H1 (cell line): ENCODE measurements at regions of chr3 and their contacts with region 1.

Region 1: GRCh38 chr3:118884748-118885206 is 149.9 kb downstream of the IGSF11 start:
- DNase-seq: peak in 1 of 2 experiments; percentile 79
- H3K4me3 ChIP-seq: no peak overlapping the region; a peak in 1 of 8 replicates
- H3K27ac ChIP-seq: no peak overlapping the region
- H3K4me1 ChIP-seq: 0 out of 7 replicates have a peak, but pooled peaks cover 0 to 3% (median 0%) of the 10 kb centered on the region in 4 experiments
- H3K27me3 ChIP-seq: no peaks in the 10 kb centered on the region
- CTCF ChIP-seq: peak; percentile 67 to 97 (median 90)
- EP300 ChIP-seq: no peak
- POLR2A ChIP-seq: no peak
- RAD21 ChIP-seq: peak; percentile 58 to 67

Region 2: DNA sequence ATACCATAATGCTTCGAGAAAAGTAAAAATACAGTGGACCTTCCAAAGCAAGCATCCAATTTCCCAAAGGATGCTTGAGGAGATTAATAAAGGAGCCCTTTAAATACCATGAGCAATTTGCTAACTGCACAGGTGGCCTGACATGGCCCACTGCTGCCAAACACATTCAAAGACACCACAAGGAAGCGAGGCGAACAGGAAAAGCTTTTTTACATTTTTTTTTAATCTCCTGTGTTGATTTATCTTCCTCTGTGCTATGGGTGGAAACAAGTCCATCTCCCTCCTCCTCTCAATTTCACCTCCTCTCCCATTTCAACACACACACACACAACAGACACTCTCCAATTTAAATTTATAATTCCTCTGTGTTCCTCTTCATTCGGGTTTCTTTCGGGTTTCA is 93.5 kb before region 1 on chr3:
- CTCF ChIA-PET with region 1: no interaction called
- POLR2A ChIA-PET with region 1: no interaction called
- DNase-seq: no peak
- H3K4me3 ChIP-seq: no peak overlapping the region
- H3K27ac ChIP-seq: no peak overlapping the region
- H3K4me1 ChIP-seq: no peaks in the 10 kb centered on the region
- H3K27me3 ChIP-seq: no peaks in the 10 kb centered on the region
- CTCF ChIP-seq: no peak
- EP300 ChIP-seq: no peak
- POLR2A ChIP-seq: no peak
- RAD21 ChIP-seq: no peak

Region 3: GRCh38 chr3:118801899-118802298 is 82.9 kb before region 1 on chr3:
- CTCF ChIA-PET with region 1: no interaction called
- POLR2A ChIA-PET with region 1: no interaction called
- DNase-seq: no peak
- H3K4me3 ChIP-seq: no peak overlapping the region
- H3K27ac ChIP-seq: no peak overlapping the region
- H3K4me1 ChIP-seq: no peaks in the 10 kb centered on the region
- H3K27me3 ChIP-seq: no peaks in the 10 kb centered on the region
- CTCF ChIP-seq: no peak
- EP300 ChIP-seq: no peak
- POLR2A ChIP-seq: no peak
- RAD21 ChIP-seq: no peak

Region 4: GRCh38 chr3:118909763-118910162 is 25.0 kb after region 1 on chr3:
- CTCF ChIA-PET with region 1: interaction called, 42 read pairs
- POLR2A ChIA-PET with region 1: no interaction called
- DNase-seq: no peak
- H3K4me3 ChIP-seq: no peak overlapping the region
- H3K27ac ChIP-seq: no peak overlapping the region
- H3K4me1 ChIP-seq: peaks cover 0 to 3% (median 0%) of the 10 kb centered on the region in 4 experiments; a peak in 2 of 7 replicates
- H3K27me3 ChIP-seq: no peaks in the 10 kb centered on the region
- CTCF ChIP-seq: no peak
- EP300 ChIP-seq: no peak
- POLR2A ChIP-seq: no peak
- RAD21 ChIP-seq: no peak

Region 5: GRCh38 chr3:118987477-118987876 is 102.7 kb after region 1 on chr3:
- CTCF ChIA-PET with region 1: interaction called, 26 read pairs
- POLR2A ChIA-PET with region 1: no interaction called
- DNase-seq: no peak
- H3K4me3 ChIP-seq: no peak overlapping the region; a peak in 1 of 8 replicates
- H3K27ac ChIP-seq: no peak overlapping the region
- H3K4me1 ChIP-seq: peaks cover 0 to 15% (median 10%) of the 10 kb centered on the region in 4 experiments; a peak in 3 of 7 replicates
- H3K27me3 ChIP-seq: no peaks in the 10 kb centered on the region
- CTCF ChIP-seq: no peak
- EP300 ChIP-seq: no peak
- POLR2A ChIP-seq: no peak
- RAD21 ChIP-seq: no peak

Region 6: GRCh38 chr3:119062892-119063291 is 178.1 kb after region 1 on chr3:
- CTCF ChIA-PET with region 1: interaction called, 20 read pairs
- POLR2A ChIA-PET with region 1: no interaction called
- DNase-seq: no peak
- H3K4me3 ChIP-seq: no peak overlapping the region
- H3K27ac ChIP-seq: no peak overlapping the region
- H3K4me1 ChIP-seq: no peaks in the 10 kb centered on the region
- H3K27me3 ChIP-seq: no peaks in the 10 kb centered on the region
- CTCF ChIP-seq: no peak
- EP300 ChIP-seq: no peak
- POLR2A ChIP-seq: no peak
- RAD21 ChIP-seq: no peak

Region 7: GRCh38 chr3:119098619-119099222 is 213.9 kb after region 1 on chr3:
- CTCF ChIA-PET with region 1: interaction called, 619 read pairs
- POLR2A ChIA-PET with region 1: no interaction called
- DNase-seq: no peak
- H3K4me3 ChIP-seq: no peak overlapping the region
- H3K27ac ChIP-seq: no peak overlapping the region
- H3K4me1 ChIP-seq: no peaks in the 10 kb centered on the region
- H3K27me3 ChIP-seq: no peaks in the 10 kb centered on the region
- CTCF ChIP-seq: peak in 2 of 3 experiments; percentile 66 to 70; a peak in 3 of 4 replicates
- EP300 ChIP-seq: no peak
- POLR2A ChIP-seq: no peak
- RAD21 ChIP-seq: peak; percentile 91 to 95

Region 8: GRCh38 chr3:119579366-119580165 is 694.8 kb after region 1 on chr3 and contains the start of gene ADPRH:
- CTCF ChIA-PET with region 1: no interaction called
- POLR2A ChIA-PET with region 1: no interaction called
- DNase-seq: peak in 1 of 2 experiments; percentile 88
- H3K4me3 ChIP-seq: peak within 1 kb of the TSS; percentile 61 to 83 (median 70)
- H3K27ac ChIP-seq: no peak within 1 kb of the TSS
- H3K4me1 ChIP-seq: peaks cover 0 to 4% (median 4%) of the 10 kb centered on the region in 4 experiments; a peak in 4 of 7 replicates
- H3K27me3 ChIP-seq: peaks cover 0 to 11% (median 8%) of the 10 kb centered on the region in 4 experiments; a peak in 4 of 7 replicates
- CTCF ChIP-seq: no peak
- EP300 ChIP-seq: 0 out of 3 replicates have a peak, but pooled peaks of 1 of the 2 experiments have one; percentile 40
- POLR2A ChIP-seq: peak; percentile 60 to 64
- RAD21 ChIP-seq: no peak
- total RNA-seq, gene ADPRH: 4.1 and 4.2 TPM in 2 replicates

Region 9: GRCh38 chr3:119681279-119681678 is 796.5 kb after region 1 on chr3:
- CTCF ChIA-PET with region 1: interaction called, 21 read pairs
- POLR2A ChIA-PET with region 1: no interaction called
- DNase-seq: no peak
- H3K4me3 ChIP-seq: no peak overlapping the region
- H3K27ac ChIP-seq: no peak overlapping the region
- H3K4me1 ChIP-seq: no peaks in the 10 kb centered on the region
- H3K27me3 ChIP-seq: no peaks in the 10 kb centered on the region
- CTCF ChIP-seq: peak in 2 of 3 experiments; percentile 35 to 43; a peak in 2 of 4 replicates
- EP300 ChIP-seq: no peak
- POLR2A ChIP-seq: no peak
- RAD21 ChIP-seq: peak; percentile 78 to 85